Esophagus squamous epithelium (tissue), 5 donors: ENCODE measurements at regions of chr17 and their contacts with region 1.

Region 1: DNA sequence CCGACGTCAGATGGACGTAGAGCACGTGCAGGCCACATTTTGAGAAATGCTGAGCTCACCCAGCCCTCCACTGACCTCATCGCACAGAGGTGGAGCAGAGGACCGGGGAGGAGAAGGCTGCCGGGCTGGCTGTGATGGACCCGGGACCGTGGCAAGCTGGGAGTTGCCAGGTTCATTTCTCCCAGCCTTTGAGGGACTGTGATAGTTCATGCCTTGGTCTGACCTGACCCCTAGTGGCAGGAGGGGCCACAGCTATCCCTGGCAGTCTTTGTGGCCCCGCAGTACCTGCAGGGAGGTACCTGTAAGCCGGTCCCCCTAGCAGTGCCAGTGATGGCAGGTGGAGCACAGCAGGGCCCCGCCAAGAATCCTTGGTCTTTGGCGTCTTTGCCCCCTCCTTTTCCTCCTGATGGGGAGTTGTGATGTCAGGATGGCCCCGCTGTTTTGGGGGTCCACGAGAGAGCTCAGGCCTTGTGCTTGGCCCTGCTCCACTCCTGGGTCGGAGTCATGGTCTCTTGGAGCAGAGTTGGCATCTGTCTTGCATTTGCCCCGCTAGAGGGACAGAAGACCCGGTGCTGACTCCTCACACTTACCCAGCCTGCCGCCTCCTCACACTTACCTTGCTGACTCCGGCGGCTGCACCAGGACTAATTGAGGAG is 50.4 kb downstream of the OR1D5 start:
- DNase-seq: no peak
- H3K4me3 ChIP-seq: no peak overlapping the region
- H3K27ac ChIP-seq: no peak overlapping the region
- H3K4me1 ChIP-seq: no peaks in the 10 kb centered on the region
- H3K27me3 ChIP-seq: no peaks in the 10 kb centered on the region
- CTCF ChIP-seq: peak; percentile 66 to 85 (median 78)
- POLR2A ChIP-seq: no peak

Region 2: GRCh38 chr17:2303204-2304188 is 709.6 kb before region 1 on chr17 and contains the starts of genes SMG6 and SRR:
- intact Hi-C with region 1: no loop called
- DNase-seq: peak; percentile 52
- H3K4me3 ChIP-seq: peak within 1 kb of the TSS; percentile 85 to 97 (median 96)
- H3K27ac ChIP-seq: peak within 1 kb of the TSS; percentile 97 to 98 (median 98)
- H3K4me1 ChIP-seq: peaks cover 12 to 66% (median 25%) of the 10 kb centered on the region in 3 donors
- H3K27me3 ChIP-seq: no peaks in the 10 kb centered on the region
- CTCF ChIP-seq: no peak
- POLR2A ChIP-seq: peak in 3 of 4 donors; percentile 37 to 66 (median 46)
- total RNA-seq, gene SMG6: 17.9 to 24.0 (median 20.1) TPM
- total RNA-seq, gene SRR: 8.7 to 34.8 (median 15.8) TPM

Region 3: GRCh38 chr17:2828397-2829038 is 184.5 kb before region 1 on chr17:
- intact Hi-C with region 1: loop called (anchors 5 kb)
- DNase-seq: no peak
- H3K4me3 ChIP-seq: no peak overlapping the region
- H3K27ac ChIP-seq: no peak overlapping the region
- H3K4me1 ChIP-seq: peaks cover 0 to 4% (median 0%) of the 10 kb centered on the region in 3 donors
- H3K27me3 ChIP-seq: peaks cover 0 to 30% (median 0%) of the 10 kb centered on the region in 4 donors
- CTCF ChIP-seq: peak; percentile 78 to 94 (median 86)
- POLR2A ChIP-seq: no peak

Region 4: GRCh38 chr17:2847381-2848333 is 165.4 kb before region 1 on chr17:
- intact Hi-C with region 1: loop called (anchors 5 kb)
- DNase-seq: no peak
- H3K4me3 ChIP-seq: no peak overlapping the region
- H3K27ac ChIP-seq: no peak overlapping the region
- H3K4me1 ChIP-seq: peaks cover 0 to 26% (median 1%) of the 10 kb centered on the region in 3 donors
- H3K27me3 ChIP-seq: peaks cover 0 to 29% (median 0%) of the 10 kb centered on the region in 4 donors
- CTCF ChIP-seq: no peak
- POLR2A ChIP-seq: no peak